Right cardiac atrium (tissue), 5 donors: ENCODE measurements at regions of chr1 and their contacts with region 1.

Region 1: DNA sequence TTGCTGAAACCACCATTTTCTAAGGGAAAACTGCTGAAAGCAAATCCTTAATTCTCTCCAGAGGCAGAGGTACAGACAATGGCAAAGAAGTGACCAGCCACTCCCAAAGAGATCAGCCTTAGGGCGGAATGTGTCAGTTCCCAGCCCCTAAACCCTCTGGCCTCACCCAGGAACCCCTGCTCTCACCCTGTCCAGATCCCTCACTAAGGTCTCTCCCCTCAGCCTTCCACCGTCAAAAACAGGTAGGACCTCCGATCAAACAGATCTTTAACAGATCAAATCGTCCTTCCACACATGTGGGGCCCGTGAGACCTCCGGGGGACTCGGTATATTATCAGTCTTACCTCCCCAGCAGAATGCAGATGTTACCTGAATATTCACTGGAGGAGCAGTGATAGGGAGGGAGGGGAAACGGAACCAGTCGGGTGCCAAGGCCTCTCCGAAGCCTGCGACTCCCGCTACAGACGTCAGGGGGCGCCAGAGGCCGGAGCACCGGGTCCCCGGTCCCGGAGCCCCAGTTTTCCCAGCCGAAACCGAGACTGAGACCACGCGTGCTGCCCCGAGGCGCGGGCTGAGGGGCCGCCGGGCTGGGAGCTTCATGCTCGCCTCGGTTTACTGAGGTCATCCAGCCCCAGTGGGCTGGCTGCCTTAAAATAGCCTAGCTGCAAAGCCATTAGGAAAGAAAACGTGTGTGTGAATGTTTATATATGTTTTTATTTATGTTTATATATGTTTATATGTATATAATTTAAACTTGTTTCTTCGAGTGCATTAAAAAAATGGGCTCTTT is 23.6 kb downstream of the GPA33 start:
- DNase-seq: peak; percentile 72 to 91 (median 89)
- ATAC-seq: peak; percentile 82 to 90
- H3K4me3 ChIP-seq: no peak overlapping the region
- H3K27ac ChIP-seq: no peak overlapping the region
- H3K4me1 ChIP-seq: no peaks in the 10 kb centered on the region
- H3K27me3 ChIP-seq: no peaks in the 10 kb centered on the region

Region 2: DNA sequence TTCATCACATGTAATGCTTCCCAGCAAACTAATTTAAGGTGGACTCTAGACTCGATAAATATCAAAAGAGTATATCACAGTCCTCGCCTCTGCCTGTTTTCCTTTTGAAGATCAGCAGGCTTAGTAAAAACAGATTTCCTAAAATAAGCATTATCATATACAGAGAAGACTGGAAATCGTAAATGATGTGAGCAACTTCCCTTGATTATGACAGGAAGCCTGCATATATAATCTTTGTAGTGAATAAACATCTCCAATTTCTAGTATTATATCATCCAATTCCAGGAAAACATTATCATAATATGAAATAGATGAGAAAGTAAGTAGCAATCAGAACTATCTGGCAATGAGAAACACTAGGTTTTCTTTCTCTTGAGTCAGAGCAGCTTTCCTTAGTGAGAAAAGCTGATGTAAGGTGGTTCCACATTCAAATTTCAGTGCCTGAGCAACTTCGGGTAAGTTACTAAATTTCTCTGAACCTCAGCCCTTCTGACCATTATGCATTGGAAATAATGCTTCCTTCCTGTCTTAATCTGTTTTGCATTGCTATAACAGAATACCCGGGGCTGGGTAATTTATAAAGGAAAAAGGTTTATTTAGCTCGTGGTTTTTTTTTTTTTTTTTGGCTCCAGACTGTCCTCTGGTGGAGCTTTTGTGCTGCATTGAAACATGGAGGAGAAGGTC is 141.6 kb after region 1 on chr1:
- intact Hi-C with region 1: loop called in 2 of 4 experiments (anchors 5 to 10 kb)
- DNase-seq: no peak
- ATAC-seq: no peak
- H3K4me3 ChIP-seq: no peak overlapping the region
- H3K27ac ChIP-seq: no peak overlapping the region
- H3K4me1 ChIP-seq: no peaks in the 10 kb centered on the region
- H3K27me3 ChIP-seq: no peaks in the 10 kb centered on the region

Region 3: GRCh38 chr1:167219646-167220536 is 153.4 kb after region 1 on chr1:
- intact Hi-C with region 1: loop called in 1 of 4 experiments (anchors 10 kb)
- DNase-seq: peak; percentile 82 to 95 (median 91)
- ATAC-seq: peak; percentile 67 to 75
- H3K4me3 ChIP-seq: peak overlapping the region; percentile 87
- H3K27ac ChIP-seq: peak overlapping the region; percentile 75
- H3K4me1 ChIP-seq: no peaks in the 10 kb centered on the region
- H3K27me3 ChIP-seq: no peaks in the 10 kb centered on the region

Region 4: DNA sequence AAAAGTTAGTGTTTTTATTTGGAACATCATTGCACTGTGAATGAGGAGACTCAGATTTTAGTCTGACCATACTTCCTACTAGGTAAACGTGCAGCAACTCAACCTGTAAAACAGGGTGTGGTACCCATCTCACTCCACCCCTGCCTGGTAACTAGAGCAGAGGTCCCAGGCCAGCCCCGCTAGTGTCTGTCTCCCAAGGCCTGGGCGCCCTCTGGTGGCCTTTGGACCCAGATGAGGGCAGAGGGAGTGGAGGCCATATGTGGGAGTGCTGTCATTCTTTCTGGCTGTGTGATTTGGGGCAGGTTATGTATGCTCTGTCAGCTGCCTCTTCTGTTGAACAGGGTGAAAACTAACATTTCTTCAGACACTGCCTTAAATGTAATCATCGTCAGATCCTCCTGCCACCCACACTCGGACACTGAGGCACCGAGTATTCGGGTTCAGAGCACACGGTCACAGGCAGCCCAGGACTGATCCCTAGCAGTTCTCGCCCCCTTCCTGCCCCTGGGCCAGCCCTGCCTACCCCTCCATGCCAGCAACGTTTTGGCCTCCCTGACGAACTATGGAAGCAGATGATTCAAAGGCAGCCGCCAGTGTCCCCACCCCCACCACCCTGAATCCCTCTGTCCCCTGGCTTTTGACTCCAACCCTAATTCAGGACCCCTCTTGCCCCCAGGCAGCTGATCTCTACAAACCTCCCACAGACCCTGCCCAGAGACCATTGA is 375.8 kb after region 1 on chr1:
- intact Hi-C with region 1: loop called (anchors 5 kb)
- DNase-seq: peak; percentile 86 to 96 (median 93)
- ATAC-seq: peak; percentile 91 to 93
- H3K4me3 ChIP-seq: no peak overlapping the region
- H3K27ac ChIP-seq: no peak overlapping the region
- H3K4me1 ChIP-seq: no peaks in the 10 kb centered on the region
- H3K27me3 ChIP-seq: no peaks in the 10 kb centered on the region